ENCODE measurements at regions of chr19 and their contacts with region 1.

Region 1: DNA sequence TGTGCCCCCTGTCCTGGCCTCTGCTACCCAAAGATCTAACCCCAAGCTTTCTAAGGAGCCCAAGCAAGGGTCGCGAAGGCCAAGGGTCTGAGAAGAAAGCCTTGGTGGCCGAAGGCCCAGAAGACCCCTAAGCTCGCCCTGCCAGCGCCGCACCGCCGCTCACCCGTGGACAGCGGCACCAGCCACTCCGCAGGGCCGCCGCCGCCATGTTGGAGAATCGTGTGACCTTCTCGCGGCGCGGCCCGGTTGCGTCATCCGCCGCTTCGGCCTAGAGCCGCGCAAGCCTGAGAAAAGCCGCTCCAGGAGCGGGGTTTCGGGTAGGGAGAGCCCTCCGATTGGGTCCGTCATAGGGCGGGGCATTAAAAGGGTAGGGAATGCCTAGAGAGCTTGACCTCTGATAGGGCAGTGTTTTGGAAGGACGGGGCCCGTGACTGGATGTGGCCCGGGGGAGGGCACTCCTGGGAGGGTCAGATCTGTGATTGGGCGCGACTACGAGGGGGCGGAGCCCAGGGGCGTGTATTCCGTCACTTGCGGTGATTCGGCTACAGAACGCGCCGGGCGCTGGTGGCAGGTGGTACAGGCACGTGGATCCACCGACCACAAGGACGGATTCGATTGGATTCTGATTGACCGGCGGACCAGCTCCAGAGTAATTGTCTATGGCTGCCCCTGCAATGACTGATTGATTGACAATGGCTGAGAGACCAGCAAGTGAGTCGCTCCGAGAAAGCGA is at the start of gene TIMM44:
- DNase-seq: peak; percentile 99
- H3K4me3 Mint-ChIP-seq: peak within 1 kb of the TSS; percentile 83
- H3K27ac Mint-ChIP-seq: peak within 1 kb of the TSS; percentile 85
- H3K4me1 Mint-ChIP-seq: peaks cover 40% of the 10 kb centered on the region
- H3K27me3 Mint-ChIP-seq: no peaks in the 10 kb centered on the region
- total RNA-seq, gene TIMM44: 48.4 to 50.9 TPM

Region 2: GRCh38 chr19:7868676-7869452 is 74.7 kb before region 1 on chr19:
- CTCF ChIA-PET with region 1: interaction called, 11 read pairs
- POLR2A ChIA-PET with region 1: no interaction called
- DNase-seq: peak; percentile 82
- H3K4me3 Mint-ChIP-seq: peak overlapping the region; percentile 60
- H3K27ac Mint-ChIP-seq: no peak overlapping the region
- H3K4me1 Mint-ChIP-seq: peaks cover 44% of the 10 kb centered on the region
- H3K27me3 Mint-ChIP-seq: peaks cover 50% of the 10 kb centered on the region

Region 3: DNA sequence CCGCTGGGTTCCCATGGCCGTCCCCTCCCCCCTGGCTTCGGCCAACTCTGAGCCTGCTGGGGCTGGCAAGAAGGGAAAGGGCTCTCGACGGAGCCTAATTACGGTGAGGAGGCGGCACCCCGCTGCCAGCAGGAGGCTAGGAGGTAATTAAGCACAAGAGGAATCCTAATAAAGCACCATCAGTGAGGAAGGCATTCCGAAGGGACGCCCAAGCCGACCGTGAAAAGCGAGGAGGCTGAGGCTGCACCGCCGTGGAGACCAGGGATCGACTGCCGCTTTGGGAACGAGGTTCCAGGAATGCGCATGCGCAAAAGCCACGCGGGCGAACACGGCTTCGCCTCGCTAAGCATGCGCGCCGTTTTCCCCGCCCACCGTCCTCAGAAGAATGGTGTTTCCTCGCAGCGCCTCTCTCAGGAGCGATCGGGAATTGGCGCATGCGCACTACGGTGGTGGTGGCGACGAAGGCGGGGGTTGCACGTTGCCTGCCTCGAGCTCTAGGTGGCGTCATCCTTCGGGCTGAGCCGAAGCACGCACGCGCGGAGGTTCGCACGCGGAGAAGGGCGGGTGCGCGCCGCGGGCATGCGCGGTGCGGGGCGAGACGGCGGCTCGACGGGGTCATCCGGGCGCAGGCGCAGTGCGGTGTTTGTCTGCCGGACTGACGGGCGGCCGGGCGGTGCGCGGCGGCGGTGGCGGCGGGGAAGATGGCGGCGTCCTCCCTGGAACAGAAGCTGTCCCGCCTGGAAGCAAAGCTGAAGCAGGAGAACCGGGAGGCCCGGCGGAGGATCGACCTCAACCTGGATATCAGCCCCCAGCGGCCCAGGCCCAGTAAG is 40.2 kb before region 1 on chr19 and contains the start of gene MAP2K7:
- CTCF ChIA-PET with region 1: interaction called, 11 read pairs
- POLR2A ChIA-PET with region 1: interaction called, 13 read pairs
- DNase-seq: peak; percentile 100
- H3K4me3 Mint-ChIP-seq: peak within 1 kb of the TSS; percentile 85
- H3K27ac Mint-ChIP-seq: peak within 1 kb of the TSS; percentile 89
- H3K4me1 Mint-ChIP-seq: peaks cover 30% of the 10 kb centered on the region
- H3K27me3 Mint-ChIP-seq: no peaks in the 10 kb centered on the region
- total RNA-seq, gene MAP2K7: 42.6 to 42.9 TPM

Region 4: GRCh38 chr19:7919610-7920518 is 23.7 kb before region 1 on chr19 and contains the start of gene SNAPC2:
- CTCF ChIA-PET with region 1: interaction called, 26 read pairs
- POLR2A ChIA-PET with region 1: interaction called, 26 read pairs
- DNase-seq: peak; percentile 98
- H3K4me3 Mint-ChIP-seq: peak within 1 kb of the TSS; percentile 82
- H3K27ac Mint-ChIP-seq: peak within 1 kb of the TSS; percentile 81
- H3K4me1 Mint-ChIP-seq: peaks cover 43% of the 10 kb centered on the region
- H3K27me3 Mint-ChIP-seq: peaks cover 27% of the 10 kb centered on the region
- total RNA-seq, gene SNAPC2: 20.4 to 24.1 TPM

Region 5: GRCh38 chr19:7928736-7929701 is 14.6 kb before region 1 on chr19:
- CTCF ChIA-PET with region 1: interaction called, 28 read pairs
- POLR2A ChIA-PET with region 1: interaction called, 11 read pairs
- DNase-seq: peak; percentile 56
- H3K4me3 Mint-ChIP-seq: no peak overlapping the region
- H3K27ac Mint-ChIP-seq: no peak overlapping the region
- H3K4me1 Mint-ChIP-seq: peaks cover 16% of the 10 kb centered on the region
- H3K27me3 Mint-ChIP-seq: no peaks in the 10 kb centered on the region

Region 6: DNA sequence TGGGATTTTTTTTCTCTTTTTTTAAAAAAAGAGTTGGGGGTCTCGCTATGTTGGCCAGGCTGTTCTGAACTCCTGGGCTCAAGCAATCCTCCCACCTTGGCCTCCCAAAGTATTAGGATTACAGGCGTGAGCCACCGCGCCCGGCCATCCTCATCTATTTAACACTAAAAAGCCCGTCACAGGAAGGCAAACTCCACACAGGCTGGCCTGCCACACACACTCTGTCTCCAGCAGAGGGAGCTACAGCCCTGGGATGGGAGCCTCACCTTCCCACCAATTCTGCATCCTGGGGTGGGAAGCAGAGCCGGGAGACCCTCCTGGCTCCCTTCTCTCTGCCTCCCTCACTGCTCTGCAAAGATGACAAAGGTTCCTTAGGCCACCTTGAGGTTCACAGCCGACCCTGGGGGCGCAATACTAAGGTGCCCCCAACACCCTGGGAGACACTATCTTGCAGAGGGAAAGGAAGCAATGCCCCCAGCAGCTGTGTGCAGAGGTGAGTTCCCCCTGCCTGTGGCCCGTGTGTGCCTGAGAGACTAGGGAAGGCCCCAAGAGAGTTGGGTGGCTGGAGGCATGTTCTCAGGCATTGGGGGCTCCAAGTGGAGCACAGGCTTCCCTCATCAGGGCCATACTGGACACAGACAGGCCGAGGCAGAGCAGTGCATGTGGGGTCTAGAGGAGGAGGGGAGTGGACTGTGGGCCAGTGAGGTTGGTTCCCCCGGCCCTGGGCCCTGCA is 27.3 kb after region 1 on chr19:
- CTCF ChIA-PET with region 1: interaction called, 23 read pairs
- POLR2A ChIA-PET with region 1: no interaction called
- DNase-seq: peak; percentile 28
- H3K4me3 Mint-ChIP-seq: no peak overlapping the region
- H3K27ac Mint-ChIP-seq: no peak overlapping the region
- H3K4me1 Mint-ChIP-seq: peaks cover 1% of the 10 kb centered on the region
- H3K27me3 Mint-ChIP-seq: no peaks in the 10 kb centered on the region

Region 7: DNA sequence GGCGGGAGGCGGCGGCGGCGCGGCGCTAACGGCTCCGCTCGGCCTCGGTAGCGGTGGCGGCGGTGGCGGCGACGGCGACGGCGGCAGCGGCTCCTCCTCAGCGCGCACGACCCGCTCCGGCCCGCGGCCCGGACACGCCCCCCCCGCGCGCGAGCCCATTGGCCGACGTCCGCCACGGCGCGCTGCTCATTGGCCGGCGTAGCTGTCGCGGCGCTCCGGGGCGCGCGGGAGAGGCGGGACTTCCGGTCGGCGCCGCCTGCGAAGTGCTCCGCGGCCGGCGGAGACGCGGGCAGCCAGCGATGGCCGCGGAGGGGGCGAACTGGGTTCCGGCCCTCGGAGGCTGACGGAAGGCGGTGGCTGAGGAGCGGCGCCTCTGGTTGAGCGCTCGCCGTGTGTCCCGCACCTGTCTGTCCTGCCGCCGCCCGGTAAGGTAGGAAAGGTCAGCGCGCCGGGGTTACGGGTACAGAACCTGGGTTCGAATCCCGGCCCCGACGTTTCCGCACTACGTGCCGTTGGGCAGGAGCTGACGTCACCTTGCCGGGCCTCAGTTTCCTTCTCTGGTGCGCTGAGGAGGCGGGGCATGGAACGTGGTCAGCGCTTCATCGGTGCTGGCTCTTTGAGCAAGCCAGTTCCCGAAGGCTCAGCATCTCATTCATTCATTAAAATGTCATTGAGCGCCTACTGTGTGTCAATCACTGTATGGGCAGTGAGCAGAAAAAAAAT is 62.1 kb after region 1 on chr19 and contains the start of gene ELAVL1:
- CTCF ChIA-PET with region 1: interaction called, 49 read pairs
- POLR2A ChIA-PET with region 1: interaction called, 18 read pairs
- DNase-seq: peak; percentile 90
- H3K4me3 Mint-ChIP-seq: peak within 1 kb of the TSS; percentile 86
- H3K27ac Mint-ChIP-seq: peak within 1 kb of the TSS; percentile 85
- H3K4me1 Mint-ChIP-seq: peaks cover 35% of the 10 kb centered on the region
- H3K27me3 Mint-ChIP-seq: no peaks in the 10 kb centered on the region
- total RNA-seq, gene ELAVL1: 93.6 to 102 TPM